ENCODE measurements at regions of chr10 and their contacts with region 1.

Region 1: DNA sequence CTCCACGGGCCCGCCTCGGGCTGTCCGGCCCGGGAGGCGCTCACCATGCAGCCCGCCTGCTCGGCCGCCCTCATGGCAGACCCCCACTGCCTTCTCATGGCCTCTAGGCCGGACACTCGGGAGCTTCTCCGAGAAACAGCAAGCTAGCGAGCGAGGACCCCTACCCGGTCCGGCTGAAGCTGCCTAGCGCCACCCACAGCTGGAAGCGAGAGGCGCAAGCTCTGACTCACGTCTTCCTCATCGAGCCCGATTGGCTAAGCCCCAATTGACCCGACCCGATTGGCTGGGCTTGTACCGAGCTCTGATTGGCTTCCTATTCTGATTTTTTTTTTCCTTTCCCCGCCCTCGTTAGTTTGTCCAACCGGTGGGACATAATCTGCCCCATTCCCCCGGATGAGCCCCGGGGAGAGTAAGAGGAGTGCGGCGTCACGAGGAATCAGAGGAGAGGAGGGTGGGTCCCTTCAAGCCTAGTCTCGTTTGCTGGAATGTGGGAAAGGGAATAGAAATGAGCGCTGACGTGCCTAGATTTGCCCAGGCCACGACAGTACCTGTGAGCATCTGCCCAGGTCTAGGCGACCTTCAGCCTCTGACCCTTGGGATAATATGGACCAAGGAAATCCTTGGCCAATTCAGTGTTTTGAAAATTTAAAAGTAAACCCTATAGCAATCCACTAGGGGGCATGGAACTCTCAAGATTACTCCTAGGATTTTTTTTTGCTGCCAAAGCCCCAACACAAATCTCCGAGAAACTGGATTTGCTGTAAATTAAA is at the start of gene TYSND1:
- DNase-seq: peak; percentile 94

Region 2: GRCh38 chr10:70007116-70007820 is 139.4 kb before region 1 on chr10:
- CTCF ChIA-PET with region 1: no interaction called
- POLR2A ChIA-PET with region 1: no interaction called
- DNase-seq: no peak

Region 3: GRCh38 chr10:70115948-70116682 is 30.6 kb before region 1 on chr10:
- CTCF ChIA-PET with region 1: interaction called, 24 read pairs
- POLR2A ChIA-PET with region 1: interaction called, 41 read pairs
- DNase-seq: peak; percentile 80

Region 4: DNA sequence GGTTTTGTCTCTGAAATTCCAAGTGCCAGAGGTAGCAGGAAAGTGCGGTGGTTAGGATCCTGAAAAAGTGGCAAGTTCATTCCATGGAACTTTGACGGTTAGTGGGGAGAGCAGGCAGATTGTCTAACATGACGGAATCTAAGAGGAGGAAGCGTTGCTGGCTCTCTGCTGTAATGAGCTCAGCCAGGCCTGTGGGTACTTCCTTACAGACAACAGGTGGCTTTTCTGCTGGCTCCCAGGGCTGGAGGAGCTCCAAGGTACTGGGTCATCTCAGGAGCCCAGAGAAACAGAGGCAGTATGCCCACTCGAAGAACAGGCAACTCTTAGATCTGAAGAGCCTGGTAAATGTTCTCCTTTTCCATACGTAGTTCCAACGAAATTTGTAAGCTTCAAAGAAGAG is 11.0 kb before region 1 on chr10:
- CTCF ChIA-PET with region 1: interaction called, 7 read pairs
- POLR2A ChIA-PET with region 1: interaction called, 10 read pairs
- DNase-seq: no peak

Region 5: GRCh38 chr10:70158113-70158512 is 11.4 kb after region 1 on chr10:
- CTCF ChIA-PET with region 1: interaction called, 6 read pairs
- POLR2A ChIA-PET with region 1: interaction called, 13 read pairs
- DNase-seq: no peak

Region 6: GRCh38 chr10:70169649-70170364 is 23.1 kb after region 1 on chr10:
- CTCF ChIA-PET with region 1: interaction called, 6 read pairs
- POLR2A ChIA-PET with region 1: interaction called, 21 read pairs
- DNase-seq: peak; percentile 29

Region 7: GRCh38 chr10:70233109-70233938 is 86.7 kb after region 1 on chr10 and contains the start of gene PPA1:
- CTCF ChIA-PET with region 1: interaction called, 3 read pairs
- POLR2A ChIA-PET with region 1: interaction called, 20 read pairs
- DNase-seq: peak; percentile 100

Region 8: GRCh38 chr10:70286616-70287015 is 139.9 kb after region 1 on chr10:
- CTCF ChIA-PET with region 1: no interaction called
- POLR2A ChIA-PET with region 1: no interaction called
- DNase-seq: no peak

Region 9: DNA sequence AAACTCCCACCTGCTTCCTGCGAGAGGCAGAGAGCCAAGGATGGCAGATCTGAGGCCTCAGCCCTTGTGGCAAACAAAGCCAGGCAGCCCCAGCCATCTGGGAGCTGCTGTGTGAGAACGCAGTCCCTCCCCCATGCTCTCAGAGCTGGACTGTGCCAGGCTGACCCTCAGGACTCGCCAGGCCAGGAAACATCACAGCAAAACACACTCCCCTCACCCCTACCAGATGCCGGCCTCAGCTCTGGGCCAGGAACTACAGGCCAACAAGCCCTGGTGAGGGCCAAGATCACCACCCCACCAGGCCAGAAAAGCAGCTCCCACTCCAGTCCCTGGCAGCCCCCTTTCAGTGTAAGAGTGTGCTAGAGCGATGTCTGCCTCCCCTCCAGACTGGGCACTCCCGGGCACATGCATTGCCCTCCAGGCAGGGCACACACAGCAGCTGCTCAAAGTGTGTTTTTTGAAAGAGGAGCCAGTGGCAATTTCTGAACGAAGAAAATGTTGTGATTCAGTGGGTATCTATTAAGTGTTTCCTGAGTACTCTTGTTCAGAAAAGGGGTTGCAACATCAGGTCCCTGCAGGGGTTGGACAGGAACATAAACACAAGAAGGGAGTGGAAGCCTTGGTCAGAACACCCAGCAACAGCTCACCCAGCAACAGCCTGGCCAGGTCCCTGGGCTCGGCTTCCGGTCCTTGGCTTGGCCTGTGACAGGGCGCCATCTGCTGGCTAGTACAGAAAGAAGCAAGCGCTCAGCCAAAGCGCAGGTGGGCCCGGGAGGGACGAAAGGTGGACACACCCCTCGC is 217.5 kb after region 1 on chr10:
- CTCF ChIA-PET with region 1: interaction called, 11 read pairs
- POLR2A ChIA-PET with region 1: interaction called, 12 read pairs
- DNase-seq: peak; percentile 90

Region 10: GRCh38 chr10:70430493-70431445 is 284.1 kb after region 1 on chr10:
- CTCF ChIA-PET with region 1: no interaction called
- POLR2A ChIA-PET with region 1: no interaction called
- DNase-seq: no peak

Measured in HEK293T (cell line).